CD8-positive, alpha-beta T cell (primary cell): ENCODE measurements at regions of chr5 and their contacts with region 1.

Region 1: GRCh38 chr5:178551059-178551458 is 39.1 kb downstream of the COL23A1 start:
- DNase-seq: peak in 1 of 9 experiments; percentile 19
- ATAC-seq: no peak
- H3K4me3 ChIP-seq: no peak overlapping the region
- H3K4me3 Mint-ChIP-seq: no peak overlapping the region
- H3K27ac ChIP-seq: no peak overlapping the region
- H3K27ac Mint-ChIP-seq: no peak overlapping the region
- H3K4me1 ChIP-seq: no peaks in the 10 kb centered on the region
- H3K4me1 Mint-ChIP-seq: no peaks in the 10 kb centered on the region
- H3K27me3 ChIP-seq: no peaks in the 10 kb centered on the region
- H3K27me3 Mint-ChIP-seq: peaks cover 10% of the 10 kb centered on the region
- CTCF ChIP-seq: peak; percentile 29

Region 2: GRCh38 chr5:178461004-178461730 is 89.9 kb before region 1 on chr5:
- CTCF ChIA-PET with region 1: interaction called, 8 read pairs
- POLR2A ChIA-PET with region 1: no interaction called
- intact Hi-C with region 1: loop called in 1 of 2 experiments (anchors 1 kb)
- DNase-seq: peak; percentile 11 to 57 (median 35)
- ATAC-seq: no peak
- H3K4me3 ChIP-seq: no peak overlapping the region
- H3K4me3 Mint-ChIP-seq: no peak overlapping the region
- H3K27ac ChIP-seq: no peak overlapping the region
- H3K27ac Mint-ChIP-seq: no peak overlapping the region
- H3K4me1 ChIP-seq: no peaks in the 10 kb centered on the region
- H3K4me1 Mint-ChIP-seq: no peaks in the 10 kb centered on the region
- H3K27me3 ChIP-seq: peaks cover 0 to 3% of the 10 kb centered on the region in 2 experiments
- H3K27me3 Mint-ChIP-seq: no peaks in the 10 kb centered on the region
- CTCF ChIP-seq: peak; percentile 52